ENCODE measurements at regions of chr2 and their contacts with region 1.

Region 1: GRCh38 chr2:210782222-210782621 is 225.8 kb downstream of the CPS1 start:
- DNase-seq: no peak
- H3K4me3 ChIP-seq: no peak overlapping the region
- H3K27ac ChIP-seq: no peak overlapping the region
- H3K4me1 ChIP-seq: no peaks in the 10 kb centered on the region
- H3K27me3 ChIP-seq: no peaks in the 10 kb centered on the region
- CTCF ChIP-seq: no peak
- POLR2A ChIP-seq: no peak

Region 2: GRCh38 chr2:210798180-210798579 is 16.0 kb after region 1 on chr2:
- intact Hi-C with region 1: loop called (anchors 2 kb)
- DNase-seq: no peak
- H3K4me3 ChIP-seq: no peak overlapping the region
- H3K27ac ChIP-seq: no peak overlapping the region
- H3K4me1 ChIP-seq: no peaks in the 10 kb centered on the region
- H3K27me3 ChIP-seq: no peaks in the 10 kb centered on the region
- CTCF ChIP-seq: no peak
- POLR2A ChIP-seq: no peak

Region 3: GRCh38 chr2:210818473-210818872 is 36.3 kb after region 1 on chr2:
- intact Hi-C with region 1: no loop called
- DNase-seq: no peak
- H3K4me3 ChIP-seq: no peak overlapping the region
- H3K27ac ChIP-seq: no peak overlapping the region
- H3K4me1 ChIP-seq: no peaks in the 10 kb centered on the region
- H3K27me3 ChIP-seq: no peaks in the 10 kb centered on the region
- CTCF ChIP-seq: no peak
- POLR2A ChIP-seq: no peak

Region 4: GRCh38 chr2:211228559-211228958 is 446.3 kb after region 1 on chr2:
- intact Hi-C with region 1: no loop called
- DNase-seq: no peak
- H3K4me3 ChIP-seq: no peak overlapping the region
- H3K27ac ChIP-seq: no peak overlapping the region
- H3K4me1 ChIP-seq: no peaks in the 10 kb centered on the region
- H3K27me3 ChIP-seq: no peaks in the 10 kb centered on the region
- CTCF ChIP-seq: no peak
- POLR2A ChIP-seq: no peak

Region 5: DNA sequence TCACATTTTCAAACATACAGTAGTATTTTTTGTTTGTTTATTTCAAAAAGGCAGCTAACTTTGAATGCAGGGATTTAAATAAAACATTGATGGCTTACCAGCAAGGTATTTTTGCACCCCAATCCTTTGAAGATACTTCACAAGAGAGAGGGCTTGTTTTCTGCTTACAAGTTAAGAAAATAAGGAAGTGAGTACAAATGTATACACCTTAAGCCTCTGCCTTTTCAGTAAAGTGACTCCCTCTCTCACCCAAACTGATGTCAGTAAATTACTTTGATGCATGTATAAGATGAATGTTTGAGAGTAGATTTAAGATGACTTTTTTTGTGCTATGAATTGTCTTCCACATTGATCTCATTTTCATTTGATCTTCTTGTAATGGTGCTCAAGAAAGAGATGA is 594.2 kb after region 1 on chr2:
- intact Hi-C with region 1: no loop called
- DNase-seq: no peak
- H3K4me3 ChIP-seq: no peak overlapping the region
- H3K27ac ChIP-seq: no peak overlapping the region
- H3K4me1 ChIP-seq: no peaks in the 10 kb centered on the region
- H3K27me3 ChIP-seq: no peaks in the 10 kb centered on the region
- CTCF ChIP-seq: no peak
- POLR2A ChIP-seq: no peak

Region 6: GRCh38 chr2:211631503-211631902 is 849.3 kb after region 1 on chr2:
- intact Hi-C with region 1: no loop called
- DNase-seq: no peak
- H3K4me3 ChIP-seq: no peak overlapping the region
- H3K27ac ChIP-seq: no peak overlapping the region
- H3K4me1 ChIP-seq: no peaks in the 10 kb centered on the region
- H3K27me3 ChIP-seq: no peaks in the 10 kb centered on the region
- CTCF ChIP-seq: no peak
- POLR2A ChIP-seq: no peak